ENCODE measurements at regions of chr4 and their contacts with region 1.

Region 1: GRCh38 chr4:41281038-41281634 is 24.4 kb downstream of the UCHL1 start:
- DNase-seq: no peak
- H3K4me3 ChIP-seq: no peak overlapping the region
- H3K27ac ChIP-seq: no peak overlapping the region
- H3K4me1 ChIP-seq: peaks cover 0 to 7% (median 4%) of the 10 kb centered on the region in 4 donors
- H3K27me3 ChIP-seq: peaks cover 0 to 10% (median 0%) of the 10 kb centered on the region in 4 donors
- CTCF ChIP-seq: peak; percentile 83 to 91 (median 90)
- EP300 ChIP-seq: no peak
- POLR2A ChIP-seq: no peak

Region 2: GRCh38 chr4:41506130-41506529 is 225.0 kb after region 1 on chr4:
- intact Hi-C with region 1: no loop called
- DNase-seq: no peak
- H3K4me3 ChIP-seq: no peak overlapping the region
- H3K27ac ChIP-seq: no peak overlapping the region
- H3K4me1 ChIP-seq: peaks cover 3 to 33% (median 22%) of the 10 kb centered on the region in 4 donors
- H3K27me3 ChIP-seq: no peaks in the 10 kb centered on the region
- CTCF ChIP-seq: no peak
- EP300 ChIP-seq: no peak
- POLR2A ChIP-seq: no peak

Region 3: GRCh38 chr4:41644288-41644914 is 363.3 kb after region 1 on chr4:
- intact Hi-C with region 1: loop called (anchors 5 kb)
- DNase-seq: peak; percentile 96
- H3K4me3 ChIP-seq: peak overlapping the region; percentile 12 to 44 (median 32)
- H3K27ac ChIP-seq: no peak overlapping the region
- H3K4me1 ChIP-seq: peaks cover 10 to 32% (median 26%) of the 10 kb centered on the region in 4 donors
- H3K27me3 ChIP-seq: no peaks in the 10 kb centered on the region
- CTCF ChIP-seq: peak; percentile 87 to 95 (median 93)
- EP300 ChIP-seq: no peak
- POLR2A ChIP-seq: no peak

Region 4: DNA sequence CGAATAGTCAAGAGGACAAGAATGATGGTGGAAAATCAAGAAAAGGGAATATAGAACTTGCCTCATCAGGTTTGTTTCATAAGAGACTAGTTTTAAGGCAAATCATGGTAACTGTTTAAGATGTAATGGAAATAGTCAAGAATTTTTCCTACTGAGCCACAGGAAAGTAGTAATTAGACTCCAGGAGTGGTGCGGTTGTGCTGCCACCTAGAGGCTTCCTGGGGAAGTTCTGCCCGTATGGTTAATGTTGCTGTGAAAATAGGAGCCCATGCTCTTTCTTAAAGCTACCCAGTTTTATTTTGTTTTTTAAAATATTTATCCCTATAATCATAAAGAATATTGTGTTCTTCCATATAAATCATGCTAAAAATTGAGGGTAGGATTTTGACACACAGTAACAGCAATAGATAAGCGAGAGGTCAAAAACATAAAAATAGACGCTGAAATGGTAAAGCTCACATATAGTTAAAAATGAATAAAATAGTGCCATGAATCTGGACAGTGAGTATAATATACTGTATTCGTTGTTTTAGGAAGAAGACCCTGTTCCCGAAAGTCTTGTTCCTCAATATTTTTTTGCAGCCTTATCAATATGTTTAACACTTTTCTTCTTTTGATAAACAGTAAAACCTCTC is 380.4 kb after region 1 on chr4:
- intact Hi-C with region 1: loop called (anchors 2 kb)
- DNase-seq: peak; percentile 86
- H3K4me3 ChIP-seq: no peak overlapping the region
- H3K27ac ChIP-seq: no peak overlapping the region
- H3K4me1 ChIP-seq: peaks cover 4 to 8% (median 6%) of the 10 kb centered on the region in 4 donors
- H3K27me3 ChIP-seq: no peaks in the 10 kb centered on the region
- CTCF ChIP-seq: peak; percentile 90 to 99 (median 97)
- EP300 ChIP-seq: no peak
- POLR2A ChIP-seq: no peak

Region 5: DNA sequence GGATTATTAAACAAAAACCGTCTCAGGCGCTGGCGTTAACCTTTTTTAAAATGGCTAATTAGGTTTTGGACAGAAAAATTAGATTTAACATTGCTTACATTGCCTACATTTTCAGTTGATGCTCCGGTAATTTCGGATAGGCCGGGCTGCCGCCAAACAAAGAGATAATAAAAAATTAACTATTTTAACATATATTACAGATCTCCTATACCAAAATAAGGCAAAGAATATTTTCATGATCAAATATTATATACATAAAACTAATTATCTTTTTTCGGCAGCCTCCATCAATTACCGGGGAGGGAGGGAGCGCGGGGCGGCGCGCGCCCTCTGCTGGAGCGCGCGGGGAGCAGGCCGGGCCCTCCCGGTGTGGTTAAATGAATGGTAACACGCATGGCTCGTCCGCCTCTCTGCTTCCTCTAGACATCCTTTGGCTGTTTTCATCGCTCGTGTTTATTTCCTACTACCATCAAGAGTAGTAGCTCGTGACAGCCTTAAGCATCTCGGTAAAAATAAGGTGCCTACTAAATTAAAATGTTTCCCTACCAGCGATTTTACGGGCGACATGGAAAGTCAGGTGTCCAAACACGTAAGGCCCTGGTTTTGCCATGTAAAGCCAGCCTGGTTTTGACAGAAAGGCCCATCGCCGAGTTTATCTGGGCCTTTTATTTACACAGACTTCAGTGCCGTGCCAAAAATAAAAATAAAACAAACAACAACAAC is 601.6 kb after region 1 on chr4:
- intact Hi-C with region 1: loop called (anchors 5 kb)
- DNase-seq: no peak
- H3K4me3 ChIP-seq: peak overlapping the region; percentile 48 to 59 (median 50)
- H3K27ac ChIP-seq: no peak overlapping the region
- H3K4me1 ChIP-seq: peaks cover 17 to 50% (median 30%) of the 10 kb centered on the region in 4 donors
- H3K27me3 ChIP-seq: peaks cover 0 to 71% (median 39%) of the 10 kb centered on the region in 4 donors
- CTCF ChIP-seq: peak; percentile 64 to 92 (median 92)
- EP300 ChIP-seq: no peak
- POLR2A ChIP-seq: no peak

Measured in esophagus muscularis mucosa (tissue), 4 donors.